ENCODE measurements at regions of chr17 and their contacts with region 1.

Region 1: GRCh38 chr17:78289802-78290363 is 58.5 kb downstream of the TMEM235 start:
- DNase-seq: peak; percentile 61 to 73
- H3K4me3 ChIP-seq: no peak overlapping the region
- H3K27ac ChIP-seq: no peak overlapping the region
- H3K4me1 ChIP-seq: no peaks in the 10 kb centered on the region
- H3K27me3 ChIP-seq: no peaks in the 10 kb centered on the region
- CTCF ChIP-seq: peak; percentile 42 to 89 (median 88)
- POLR2A ChIP-seq: no peak

Region 2: DNA sequence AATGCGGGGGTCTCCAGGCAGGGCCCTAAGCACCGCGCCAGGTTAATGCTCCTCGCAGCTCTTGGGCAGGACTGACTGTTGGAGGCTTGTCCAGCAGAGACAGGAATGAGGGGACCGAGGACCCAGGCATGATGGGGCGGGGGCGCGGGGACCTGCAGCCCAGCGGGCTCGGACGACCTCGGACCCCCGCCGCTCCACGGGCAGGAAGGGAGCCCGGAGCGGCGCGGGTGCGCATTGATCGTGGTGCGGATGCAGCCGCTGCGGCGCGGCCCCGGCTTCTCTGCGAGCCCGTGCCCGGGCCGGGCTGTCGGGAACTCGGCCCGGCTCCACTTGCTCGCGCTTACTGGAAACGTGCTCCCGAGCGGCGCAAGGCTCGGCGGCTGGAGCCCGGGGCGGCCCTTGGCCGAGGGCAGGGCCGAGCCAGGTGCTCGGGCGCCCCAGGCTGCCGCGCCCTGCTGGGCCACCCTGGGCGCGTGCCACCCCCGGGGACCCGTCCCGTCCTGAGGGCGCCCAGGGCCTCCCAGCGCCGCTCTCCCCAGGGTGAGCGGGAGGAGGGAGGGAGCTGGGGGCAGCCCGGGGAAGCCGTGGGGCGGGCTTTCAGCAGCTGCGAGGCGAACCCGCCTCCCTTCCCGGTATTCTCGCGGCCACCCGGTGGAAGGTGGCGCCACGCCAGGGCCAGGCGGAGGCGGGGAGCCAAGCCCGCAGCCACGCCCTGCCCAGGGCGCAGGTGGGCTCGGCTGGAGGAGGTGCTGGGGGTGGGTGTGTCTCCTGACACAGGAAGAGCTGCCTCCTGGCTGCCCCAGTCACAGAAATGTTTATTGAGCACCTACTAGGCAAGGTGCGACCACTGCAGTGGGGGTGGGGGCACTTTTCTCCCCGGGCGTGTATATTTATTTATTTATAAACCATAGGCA is 24.1 kb after region 1 on chr17:
- intact Hi-C with region 1: no loop called
- DNase-seq: peak; percentile 62 to 79
- H3K4me3 ChIP-seq: peak overlapping the region; percentile 34 to 68 (median 57)
- H3K27ac ChIP-seq: peak overlapping the region; percentile 67 to 88
- H3K4me1 ChIP-seq: peaks cover 7 to 14% of the 10 kb centered on the region in 2 donors
- H3K27me3 ChIP-seq: no peaks in the 10 kb centered on the region
- CTCF ChIP-seq: no peak
- POLR2A ChIP-seq: peak; percentile 27

Region 3: DNA sequence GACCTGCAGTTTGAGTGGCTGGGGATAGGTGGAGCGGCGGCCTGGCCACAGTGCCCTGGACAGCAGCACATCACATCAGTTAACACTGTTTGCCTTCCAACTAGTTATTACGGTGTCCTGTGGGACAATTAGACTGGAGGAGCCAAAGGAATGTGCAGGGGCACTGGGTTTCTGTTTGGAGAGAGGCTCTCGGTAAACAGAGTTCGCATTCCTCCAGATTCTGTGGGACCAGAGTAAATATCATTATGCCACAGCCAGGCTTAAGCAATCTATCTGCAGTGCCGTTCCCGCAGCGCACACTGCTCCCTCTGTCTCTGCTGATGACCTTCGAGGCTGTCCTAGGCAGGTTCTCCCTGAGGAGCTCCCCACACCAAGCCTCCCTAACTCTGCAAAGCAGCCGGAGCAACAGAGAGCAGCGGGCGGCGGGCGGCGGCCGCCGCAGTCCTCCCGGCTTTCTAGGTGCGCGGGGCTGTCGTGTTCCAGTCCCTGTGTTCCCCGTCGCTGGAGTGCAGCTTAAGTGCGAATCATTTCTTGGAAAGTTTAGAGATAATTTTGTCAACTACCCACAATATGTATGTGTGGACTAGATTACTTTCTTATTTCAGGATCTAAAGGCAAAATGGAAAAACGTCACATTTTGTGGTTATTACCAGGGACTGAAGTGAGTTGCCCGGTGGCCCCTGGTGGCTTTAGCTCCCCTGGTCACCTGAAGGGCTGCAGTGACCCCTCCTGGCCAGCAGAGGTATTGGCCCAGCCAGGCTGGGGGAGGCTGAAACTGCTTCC is 131.8 kb after region 1 on chr17:
- intact Hi-C with region 1: loop called (anchors 10 kb)
- DNase-seq: peak; percentile 60 to 77
- H3K4me3 ChIP-seq: no peak overlapping the region
- H3K27ac ChIP-seq: peak overlapping the region; percentile 8 to 38
- H3K4me1 ChIP-seq: no peaks in the 10 kb centered on the region
- H3K27me3 ChIP-seq: no peaks in the 10 kb centered on the region
- CTCF ChIP-seq: peak; percentile 83 to 98 (median 97)
- POLR2A ChIP-seq: no peak